ENCODE measurements at regions of chr2 and their contacts with region 1.

Region 1: GRCh38 chr2:146927080-146927711 is 917.6 kb upstream of the ACVR2A start:
- DNase-seq: peak; percentile 59
- H3K4me3 ChIP-seq: no peak overlapping the region
- H3K27ac ChIP-seq: no peak overlapping the region
- H3K4me1 ChIP-seq: no peaks in the 10 kb centered on the region
- H3K27me3 ChIP-seq: no peaks in the 10 kb centered on the region
- CTCF ChIP-seq: peak; percentile 88

Region 2: DNA sequence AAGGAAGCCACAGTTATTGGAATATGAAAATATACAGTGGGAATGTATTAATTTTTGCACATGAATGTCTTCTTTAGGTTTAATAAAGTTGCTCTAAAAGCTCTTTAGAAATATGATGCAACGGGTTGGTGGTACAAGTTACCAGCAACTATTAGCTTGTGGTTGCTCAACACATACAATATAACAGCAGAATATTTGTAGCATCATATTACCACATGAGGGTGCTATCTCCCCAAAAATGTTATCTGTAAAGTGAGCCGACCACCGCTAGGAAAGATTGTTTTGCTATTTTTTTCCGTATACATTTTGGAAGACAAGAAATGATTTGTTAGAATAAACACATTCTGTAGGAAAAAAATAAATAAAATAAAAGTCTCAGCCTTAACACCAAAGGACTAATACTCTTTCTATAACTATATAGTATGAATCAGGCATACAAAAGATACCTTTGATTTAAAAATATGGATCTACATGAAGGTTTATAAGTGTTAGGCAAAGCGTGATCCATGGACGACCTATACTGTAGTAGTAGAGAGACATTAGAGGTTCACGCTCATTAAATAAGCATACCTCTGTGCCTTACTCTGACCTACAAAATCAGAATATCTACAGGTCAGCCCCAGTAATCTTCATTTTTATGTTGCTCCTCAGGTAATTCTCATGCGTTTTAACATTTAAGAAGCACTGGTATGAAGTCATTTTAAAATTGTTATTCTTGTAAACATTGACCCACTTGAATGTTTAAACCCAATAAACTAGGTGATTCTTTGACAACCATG is 193.0 kb before region 1 on chr2:
- CTCF ChIA-PET with region 1: no interaction called
- dilution Hi-C with region 1: no loop called
- in situ Hi-C with region 1: no loop called
- intact Hi-C with region 1: loop called (anchors 1 kb)
- DNase-seq: peak; percentile 39
- H3K4me3 ChIP-seq: no peak overlapping the region
- H3K27ac ChIP-seq: no peak overlapping the region
- H3K4me1 ChIP-seq: no peaks in the 10 kb centered on the region
- H3K27me3 ChIP-seq: no peaks in the 10 kb centered on the region
- CTCF ChIP-seq: peak; percentile 56 to 62

Region 3: DNA sequence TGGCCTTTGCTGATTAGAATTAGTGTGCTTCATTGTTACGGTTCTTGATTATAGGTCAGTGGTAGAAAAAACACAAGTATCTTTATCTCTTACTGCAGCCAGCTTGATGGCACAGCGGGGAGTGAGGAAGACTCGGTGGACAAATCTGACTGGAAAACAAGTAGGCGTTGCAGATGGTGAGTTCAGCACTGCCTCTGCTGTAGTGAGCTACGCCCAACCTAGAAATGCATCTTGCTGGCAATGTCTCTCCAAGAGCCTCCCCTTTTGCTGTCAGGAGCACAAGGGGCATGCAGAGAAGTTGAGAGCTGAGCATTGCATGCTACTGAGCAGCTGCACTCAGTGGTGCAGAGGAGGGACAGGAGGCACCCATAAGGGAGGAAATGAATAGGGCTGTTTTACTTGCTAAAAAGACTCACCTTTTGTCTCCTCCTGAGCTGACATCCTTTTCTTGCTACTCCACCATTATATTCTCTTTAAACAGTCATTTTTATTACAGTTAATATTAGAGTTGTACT is 59.7 kb before region 1 on chr2:
- CTCF ChIA-PET with region 1: no interaction called
- dilution Hi-C with region 1: no loop called
- in situ Hi-C with region 1: no loop called
- intact Hi-C with region 1: no loop called
- DNase-seq: no peak
- H3K4me3 ChIP-seq: no peak overlapping the region
- H3K27ac ChIP-seq: no peak overlapping the region
- H3K4me1 ChIP-seq: peaks cover 3% of the 10 kb centered on the region
- H3K27me3 ChIP-seq: no peaks in the 10 kb centered on the region
- CTCF ChIP-seq: no peak

Region 4: GRCh38 chr2:146952696-146953095 is 25.5 kb after region 1 on chr2:
- CTCF ChIA-PET with region 1: interaction called, 13 read pairs
- dilution Hi-C with region 1: no loop called
- in situ Hi-C with region 1: no loop called
- intact Hi-C with region 1: no loop called
- DNase-seq: no peak
- H3K4me3 ChIP-seq: no peak overlapping the region
- H3K27ac ChIP-seq: no peak overlapping the region
- H3K4me1 ChIP-seq: no peaks in the 10 kb centered on the region
- H3K27me3 ChIP-seq: no peaks in the 10 kb centered on the region
- CTCF ChIP-seq: no peak

Region 5: GRCh38 chr2:147045113-147045512 is 117.9 kb after region 1 on chr2:
- CTCF ChIA-PET with region 1: no interaction called
- dilution Hi-C with region 1: no loop called
- in situ Hi-C with region 1: no loop called
- intact Hi-C with region 1: loop called (anchors 1 kb)
- DNase-seq: peak; percentile 69
- H3K4me3 ChIP-seq: no peak overlapping the region
- H3K27ac ChIP-seq: no peak overlapping the region
- H3K4me1 ChIP-seq: no peaks in the 10 kb centered on the region
- H3K27me3 ChIP-seq: no peaks in the 10 kb centered on the region
- CTCF ChIP-seq: peak; percentile 63 to 78

Region 6: DNA sequence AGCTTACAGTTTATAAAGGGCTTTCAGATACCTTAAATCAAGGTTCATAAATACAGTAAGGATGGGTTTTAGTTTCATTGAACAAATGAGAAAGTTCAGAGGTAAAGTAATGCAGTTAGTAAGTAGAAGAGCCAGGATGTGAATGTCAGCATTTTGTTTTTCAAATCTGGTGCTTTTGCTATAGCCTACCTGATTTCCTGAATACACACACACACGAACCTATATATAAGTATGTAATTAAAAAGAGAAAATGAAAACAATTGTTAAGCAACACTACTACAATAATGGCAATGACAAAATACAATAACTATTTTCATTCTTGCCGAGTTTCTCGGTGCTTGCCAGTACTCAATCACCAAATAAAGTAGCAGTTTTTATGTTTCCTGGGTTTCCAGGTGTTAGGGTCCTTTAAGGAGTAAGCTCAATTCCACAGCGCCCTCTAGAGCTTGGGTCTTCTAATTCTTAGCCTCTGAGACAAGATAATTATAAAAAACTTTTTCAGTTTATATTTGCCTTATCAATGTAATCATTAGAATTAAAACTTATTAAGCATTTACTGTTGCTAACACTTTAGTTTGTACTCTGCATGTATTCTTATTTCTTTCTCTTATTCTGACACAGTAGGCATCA is 404.7 kb after region 1 on chr2:
- CTCF ChIA-PET with region 1: interaction called, 4 read pairs
- dilution Hi-C with region 1: no loop called
- in situ Hi-C with region 1: no loop called
- intact Hi-C with region 1: loop called (anchors 1 kb)
- DNase-seq: peak; percentile 42
- H3K4me3 ChIP-seq: no peak overlapping the region
- H3K27ac ChIP-seq: no peak overlapping the region
- H3K4me1 ChIP-seq: no peaks in the 10 kb centered on the region
- H3K27me3 ChIP-seq: no peaks in the 10 kb centered on the region
- CTCF ChIP-seq: peak; percentile 61 to 73